ENCODE measurements at regions of chr16 and their contacts with region 1.

Region 1: GRCh38 chr16:84970447-84971127 is 40.7 kb downstream of the ZDHHC7 start:
- DNase-seq: peak; percentile 88
- H3K4me3 Mint-ChIP-seq: no peak overlapping the region
- H3K27ac Mint-ChIP-seq: no peak overlapping the region
- H3K4me1 Mint-ChIP-seq: no peaks in the 10 kb centered on the region
- H3K27me3 Mint-ChIP-seq: peaks cover 9% of the 10 kb centered on the region
- CTCF ChIP-seq: peak; percentile 95

Region 2: DNA sequence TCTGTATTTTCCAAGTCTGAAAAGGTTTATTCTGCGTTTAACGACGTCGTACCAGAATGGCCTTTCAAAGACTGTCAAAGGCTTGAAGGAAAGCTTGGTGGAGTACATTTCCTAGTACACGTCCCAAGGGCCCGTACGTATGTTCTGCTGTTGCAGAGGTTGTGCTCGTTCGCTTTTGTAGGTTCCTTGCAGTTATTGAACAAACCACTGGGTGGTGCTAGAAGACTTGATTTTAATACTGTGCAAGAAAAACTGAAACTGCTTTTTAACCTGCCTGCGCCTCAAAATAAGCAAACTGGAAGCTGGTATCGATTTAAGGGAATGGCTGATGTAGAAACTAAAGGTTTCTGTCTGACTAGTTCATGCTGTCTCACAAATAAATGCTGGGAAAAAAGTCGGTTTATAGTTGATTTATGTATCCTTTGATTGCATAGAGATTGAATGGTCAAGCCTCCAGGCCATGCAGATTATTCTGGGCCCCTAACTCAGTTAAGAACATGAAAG is 216.2 kb before region 1 on chr16:
- CTCF ChIA-PET with region 1: interaction called, 10 read pairs
- intact Hi-C with region 1: loop called (anchors 1 kb)
- DNase-seq: peak; percentile 84
- H3K4me3 Mint-ChIP-seq: no peak overlapping the region
- H3K27ac Mint-ChIP-seq: no peak overlapping the region
- H3K4me1 Mint-ChIP-seq: peaks cover 24% of the 10 kb centered on the region
- H3K27me3 Mint-ChIP-seq: no peaks in the 10 kb centered on the region
- CTCF ChIP-seq: peak; percentile 79

Region 3: DNA sequence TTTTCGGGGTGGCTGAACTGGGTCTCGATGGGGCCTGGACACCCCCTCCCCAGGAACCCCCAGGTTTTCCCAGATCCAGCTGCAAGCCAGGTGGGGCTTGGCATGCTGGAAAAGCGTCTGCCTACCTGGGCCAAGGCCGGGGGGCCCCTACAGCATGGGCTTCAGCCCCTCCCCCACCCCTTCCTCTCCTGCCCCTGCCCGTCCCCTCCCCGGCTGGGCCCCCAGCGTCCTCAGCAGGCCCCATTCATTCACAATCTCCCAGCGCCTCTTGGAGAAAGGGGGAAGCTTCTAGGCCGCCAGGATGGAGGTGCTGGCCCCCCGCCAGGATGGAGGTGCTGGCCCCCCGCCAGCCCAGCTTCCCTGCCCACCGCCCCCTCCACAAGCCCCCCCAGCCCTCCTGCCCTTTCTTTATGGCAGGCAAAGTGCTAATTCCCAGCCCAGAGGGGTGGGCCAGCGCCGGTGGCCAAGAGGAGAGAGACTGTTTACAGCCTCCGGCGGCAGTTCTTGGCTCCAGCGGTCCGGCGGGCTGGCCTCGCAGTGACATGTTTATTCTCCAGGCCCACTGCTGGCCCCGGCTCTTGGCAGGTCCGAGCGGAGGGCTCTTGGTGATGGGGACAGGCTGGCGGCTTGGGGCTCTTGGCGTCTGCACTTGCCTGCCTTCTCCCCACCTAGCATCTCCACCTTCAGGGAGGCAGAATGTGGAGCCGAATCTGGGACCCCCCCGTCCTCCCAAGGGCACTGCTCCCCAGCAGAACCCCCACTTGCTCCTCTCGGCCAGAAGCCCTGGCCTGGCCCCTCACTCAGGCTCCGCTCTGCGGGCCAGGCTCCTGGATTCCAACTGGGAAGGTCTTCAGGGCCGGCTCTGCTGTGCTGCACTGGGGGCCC is 236.1 kb after region 1 on chr16:
- CTCF ChIA-PET with region 1: no interaction called
- intact Hi-C with region 1: no loop called
- DNase-seq: no peak
- H3K4me3 Mint-ChIP-seq: no peak overlapping the region
- H3K27ac Mint-ChIP-seq: no peak overlapping the region
- H3K4me1 Mint-ChIP-seq: no peaks in the 10 kb centered on the region
- H3K27me3 Mint-ChIP-seq: peaks cover 90% of the 10 kb centered on the region
- CTCF ChIP-seq: no peak

Measured in Calu3 (cell line).